ENCODE measurements at regions of chr17 and their contacts with region 1.

Region 1: GRCh38 chr17:40909351-40909750 is 24.3 kb upstream of the KRT20 start:
- DNase-seq: peak; percentile 96
- H3K4me3 Mint-ChIP-seq: peak overlapping the region; percentile 61
- H3K27ac Mint-ChIP-seq: peak overlapping the region; percentile 91
- H3K4me1 Mint-ChIP-seq: peaks cover 16% of the 10 kb centered on the region
- H3K27me3 Mint-ChIP-seq: no peaks in the 10 kb centered on the region
- CTCF ChIP-seq: peak; percentile 71

Region 2: DNA sequence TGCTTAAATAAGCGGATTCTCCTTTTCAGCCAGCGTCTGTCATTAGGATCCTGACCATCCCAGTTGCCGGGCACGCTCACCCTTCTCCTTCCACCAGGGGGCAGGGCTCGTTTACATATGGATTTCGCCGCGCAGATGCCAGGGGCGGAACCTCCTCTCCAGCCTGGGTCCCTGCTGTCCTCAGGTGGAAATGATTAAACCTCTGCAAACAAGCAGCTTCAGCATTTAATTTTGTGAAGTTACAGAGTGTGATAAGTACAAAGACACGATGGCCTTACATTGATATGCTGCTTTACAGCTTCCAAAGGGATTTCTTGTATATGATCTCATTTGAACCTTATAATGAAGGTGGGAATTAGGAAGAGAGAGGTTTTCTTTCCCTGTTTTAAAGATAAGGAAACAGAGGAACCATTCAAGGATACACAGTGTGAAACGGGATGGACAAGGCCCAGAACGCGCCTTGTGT is 105.7 kb before region 1 on chr17:
- CTCF ChIA-PET with region 1: interaction called, 5 read pairs
- POLR2A ChIA-PET with region 1: no interaction called
- intact Hi-C with region 1: loop called (anchors 1 kb)
- DNase-seq: peak; percentile 84
- H3K4me3 Mint-ChIP-seq: no peak overlapping the region
- H3K27ac Mint-ChIP-seq: no peak overlapping the region
- H3K4me1 Mint-ChIP-seq: no peaks in the 10 kb centered on the region
- H3K27me3 Mint-ChIP-seq: no peaks in the 10 kb centered on the region
- CTCF ChIP-seq: peak; percentile 86

Region 3: GRCh38 chr17:41322094-41322902 is 412.9 kb after region 1 on chr17:
- CTCF ChIA-PET with region 1: interaction called, 57 read pairs
- POLR2A ChIA-PET with region 1: interaction called, 19 read pairs
- intact Hi-C with region 1: loop called (anchors 1 kb)
- DNase-seq: peak; percentile 61
- H3K4me3 Mint-ChIP-seq: no peak overlapping the region
- H3K27ac Mint-ChIP-seq: no peak overlapping the region
- H3K4me1 Mint-ChIP-seq: no peaks in the 10 kb centered on the region
- H3K27me3 Mint-ChIP-seq: no peaks in the 10 kb centered on the region
- CTCF ChIP-seq: peak; percentile 76

Region 4: GRCh38 chr17:41496820-41497408 is 587.6 kb after region 1 on chr17:
- CTCF ChIA-PET with region 1: interaction called, 4 read pairs
- POLR2A ChIA-PET with region 1: interaction called, 3 read pairs
- intact Hi-C with region 1: loop called (anchors 1 kb)
- DNase-seq: peak; percentile 94
- H3K4me3 Mint-ChIP-seq: no peak overlapping the region
- H3K27ac Mint-ChIP-seq: peak overlapping the region; percentile 68
- H3K4me1 Mint-ChIP-seq: peaks cover 25% of the 10 kb centered on the region
- H3K27me3 Mint-ChIP-seq: no peaks in the 10 kb centered on the region
- CTCF ChIP-seq: peak; percentile 88

Region 5: DNA sequence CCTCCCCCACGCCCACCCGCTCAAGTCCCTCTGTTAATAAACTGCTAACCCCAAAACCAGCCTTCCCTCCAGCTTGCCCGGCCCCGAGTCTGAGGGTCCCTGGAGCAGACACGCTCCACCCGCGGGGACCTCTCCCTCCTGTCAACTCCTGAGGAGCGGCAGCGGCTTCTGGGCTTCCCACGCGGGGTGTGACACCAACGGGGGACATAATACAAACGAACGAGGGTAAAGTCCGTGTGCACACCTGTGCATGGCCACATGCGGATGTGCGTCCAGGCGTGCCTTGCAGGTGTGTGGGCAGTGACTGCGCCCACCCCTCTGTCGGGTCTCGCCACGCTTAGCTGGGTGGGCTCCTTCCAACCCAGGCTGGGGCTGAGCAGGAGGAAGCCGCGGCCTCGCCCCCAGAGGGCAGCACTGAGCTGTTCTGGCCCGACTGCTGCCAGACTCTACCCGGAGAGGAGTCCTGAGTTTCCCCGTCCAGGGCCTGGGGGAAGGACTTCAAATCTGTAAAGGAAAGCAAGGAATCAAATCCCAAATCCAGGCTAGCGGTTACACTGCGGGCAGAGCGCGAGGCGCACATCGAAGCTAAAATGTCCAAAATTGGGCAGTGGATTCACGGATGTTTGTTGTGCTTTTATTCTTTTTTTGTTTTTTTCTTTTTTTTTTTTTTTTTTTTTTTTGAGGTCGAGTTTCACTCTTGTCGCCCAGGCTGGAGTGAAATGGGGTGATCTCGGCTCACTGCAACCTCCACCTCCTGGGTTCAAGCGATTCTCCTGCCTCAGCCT is 739.3 kb after region 1 on chr17:
- CTCF ChIA-PET with region 1: interaction called, 3 read pairs
- POLR2A ChIA-PET with region 1: interaction called, 7 read pairs
- intact Hi-C with region 1: loop called (anchors 5 kb)
- DNase-seq: peak; percentile 87
- H3K4me3 Mint-ChIP-seq: peak overlapping the region; percentile 22
- H3K27ac Mint-ChIP-seq: peak overlapping the region; percentile 93
- H3K4me1 Mint-ChIP-seq: peaks cover 34% of the 10 kb centered on the region
- H3K27me3 Mint-ChIP-seq: no peaks in the 10 kb centered on the region
- CTCF ChIP-seq: peak; percentile 88